Ovary (tissue), 10 donors: ENCODE measurements at regions of chr1 and their contacts with region 1.

Region 1: DNA sequence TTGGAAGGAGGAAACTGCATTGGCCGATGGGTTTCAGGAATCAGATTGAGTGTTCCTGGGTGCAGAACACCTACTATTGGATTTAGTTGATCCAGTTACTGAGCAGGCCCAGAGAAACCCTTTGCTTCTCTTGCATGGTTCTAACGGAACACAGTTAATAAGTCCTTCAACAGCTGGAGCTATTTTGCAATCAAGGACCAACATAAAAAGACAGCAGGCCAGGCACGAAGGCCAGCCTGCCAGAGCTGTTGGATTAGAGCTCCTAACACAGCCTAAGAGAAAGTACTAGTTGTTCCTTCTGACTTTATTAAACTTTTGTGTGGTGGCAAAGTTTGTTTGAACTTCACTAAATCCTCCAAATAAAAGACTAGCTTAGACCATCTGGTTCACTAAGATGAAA is 148.0 kb upstream of the LMO4 start:
- DNase-seq: no peak
- H3K4me3 ChIP-seq: no peak overlapping the region
- H3K27ac ChIP-seq: no peak overlapping the region
- H3K4me1 ChIP-seq: no peaks in the 10 kb centered on the region
- H3K27me3 ChIP-seq: no peaks in the 10 kb centered on the region
- CTCF ChIP-seq: no peak
- EP300 ChIP-seq: no peak
- POLR2A ChIP-seq: no peak

Region 2: GRCh38 chr1:86345042-86345441 is 835.6 kb before region 1 on chr1:
- intact Hi-C with region 1: loop called in 1 of 4 experiments (anchors 10 kb)
- DNase-seq: no peak
- H3K4me3 ChIP-seq: no peak overlapping the region
- H3K27ac ChIP-seq: no peak overlapping the region
- H3K4me1 ChIP-seq: no peaks in the 10 kb centered on the region
- H3K27me3 ChIP-seq: no peaks in the 10 kb centered on the region
- CTCF ChIP-seq: no peak
- EP300 ChIP-seq: no peak
- POLR2A ChIP-seq: no peak

Region 3: DNA sequence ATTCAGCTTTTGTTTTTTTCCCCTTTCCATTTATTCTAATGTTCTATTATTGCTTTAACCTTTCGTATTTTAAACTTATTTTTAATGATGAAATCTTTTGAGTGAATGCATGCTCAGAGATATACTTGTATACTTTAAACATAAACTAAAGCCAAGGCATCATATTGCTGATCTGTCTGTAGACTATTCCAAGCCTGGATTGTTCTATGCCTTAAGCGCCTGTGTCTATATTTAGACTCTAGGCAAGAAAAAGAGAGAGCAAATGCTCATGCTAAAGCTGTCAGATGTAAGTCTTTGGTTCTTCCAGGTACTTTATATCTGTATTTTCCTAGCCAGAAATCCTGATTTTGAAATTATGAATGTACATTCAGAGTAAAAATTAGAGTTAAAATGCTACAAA is 461.9 kb before region 1 on chr1:
- intact Hi-C with region 1: no loop called
- DNase-seq: no peak
- H3K4me3 ChIP-seq: no peak overlapping the region
- H3K27ac ChIP-seq: no peak overlapping the region
- H3K4me1 ChIP-seq: peaks cover 8% of the 10 kb centered on the region
- H3K27me3 ChIP-seq: no peaks in the 10 kb centered on the region
- CTCF ChIP-seq: no peak
- EP300 ChIP-seq: no peak
- POLR2A ChIP-seq: no peak

Region 4: DNA sequence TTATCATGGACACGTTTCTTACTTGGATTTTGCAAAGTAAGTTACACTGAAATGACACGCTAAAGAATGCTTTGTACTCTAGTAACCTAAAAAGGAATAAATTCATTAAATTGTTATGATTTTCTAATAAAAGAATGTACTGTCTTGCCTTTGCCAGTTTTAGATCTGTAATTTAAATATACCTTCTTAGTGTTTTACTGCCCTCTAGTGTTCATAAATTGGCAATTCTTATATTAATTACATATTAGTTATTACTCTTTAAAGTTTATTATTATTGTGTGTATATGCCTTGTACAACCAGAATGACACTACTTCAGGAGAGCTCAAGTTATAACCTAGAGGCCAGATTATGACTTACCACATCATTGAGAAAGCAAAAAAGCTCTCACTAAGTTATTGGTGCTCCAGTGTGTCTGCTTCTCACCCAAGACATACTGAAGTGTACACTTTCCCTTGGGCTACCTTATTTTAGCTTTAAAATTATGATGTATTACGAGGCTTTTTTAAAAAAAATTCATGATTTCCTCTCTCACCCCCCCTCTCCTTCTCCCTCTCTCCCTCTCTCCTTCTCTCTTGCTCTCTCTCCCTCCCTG is 96.3 kb before region 1 on chr1:
- intact Hi-C with region 1: no loop called
- DNase-seq: no peak
- H3K4me3 ChIP-seq: no peak overlapping the region
- H3K27ac ChIP-seq: no peak overlapping the region
- H3K4me1 ChIP-seq: no peaks in the 10 kb centered on the region
- H3K27me3 ChIP-seq: no peaks in the 10 kb centered on the region
- CTCF ChIP-seq: peak; percentile 26 to 49 (median 45)
- EP300 ChIP-seq: no peak
- POLR2A ChIP-seq: no peak

Region 5: DNA sequence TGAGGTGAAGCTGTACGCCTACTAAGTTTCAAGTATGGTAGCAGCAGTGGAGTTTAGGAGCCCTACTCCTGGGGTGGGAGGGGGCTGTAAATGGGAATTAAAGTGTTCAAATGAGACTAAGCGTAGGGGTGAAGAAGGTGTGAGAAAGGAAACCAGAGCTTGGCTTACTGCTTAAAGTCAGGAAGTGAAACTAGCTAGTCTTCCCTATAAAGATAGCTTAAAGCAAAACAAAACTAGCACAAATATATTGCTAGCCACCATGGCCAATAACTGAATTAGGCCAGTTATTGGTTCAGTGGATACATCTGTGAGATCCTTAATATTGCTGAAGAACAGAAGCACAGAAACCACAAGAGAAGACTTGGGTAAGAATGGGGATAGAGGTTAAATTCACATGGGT is 1011.2 kb after region 1 on chr1:
- intact Hi-C with region 1: no loop called
- DNase-seq: no peak
- H3K4me3 ChIP-seq: no peak overlapping the region
- H3K27ac ChIP-seq: no peak overlapping the region
- H3K4me1 ChIP-seq: no peaks in the 10 kb centered on the region
- H3K27me3 ChIP-seq: no peaks in the 10 kb centered on the region
- CTCF ChIP-seq: no peak
- EP300 ChIP-seq: no peak
- POLR2A ChIP-seq: no peak